Calu3 (cell line): ENCODE measurements at regions of chr4 and their contacts with region 1.

Region 1: DNA sequence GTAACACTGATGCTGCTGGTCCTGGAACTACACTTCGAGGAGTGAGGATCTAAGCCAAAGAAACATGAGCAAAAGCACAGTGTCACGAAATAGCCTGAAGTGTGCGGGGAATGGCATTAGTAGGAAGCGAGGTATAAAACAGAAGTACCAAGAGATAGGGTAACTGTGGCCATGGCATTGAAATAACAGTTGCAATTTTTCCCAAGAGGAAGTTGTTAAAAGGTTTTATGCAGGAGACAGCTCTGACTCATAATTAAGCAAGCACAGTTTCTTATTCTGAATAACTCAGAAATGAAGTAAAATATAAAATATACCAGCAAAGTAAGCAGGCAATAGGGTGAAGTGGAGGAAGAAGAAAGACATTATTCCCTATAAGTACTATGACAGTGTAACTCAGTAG is 90.3 kb upstream of the TMEM150C start:
- DNase-seq: no peak
- H3K4me3 Mint-ChIP-seq: no peak overlapping the region
- H3K27ac Mint-ChIP-seq: no peak overlapping the region
- H3K4me1 Mint-ChIP-seq: peaks cover 10% of the 10 kb centered on the region
- H3K27me3 Mint-ChIP-seq: no peaks in the 10 kb centered on the region
- CTCF ChIP-seq: no peak

Region 2: DNA sequence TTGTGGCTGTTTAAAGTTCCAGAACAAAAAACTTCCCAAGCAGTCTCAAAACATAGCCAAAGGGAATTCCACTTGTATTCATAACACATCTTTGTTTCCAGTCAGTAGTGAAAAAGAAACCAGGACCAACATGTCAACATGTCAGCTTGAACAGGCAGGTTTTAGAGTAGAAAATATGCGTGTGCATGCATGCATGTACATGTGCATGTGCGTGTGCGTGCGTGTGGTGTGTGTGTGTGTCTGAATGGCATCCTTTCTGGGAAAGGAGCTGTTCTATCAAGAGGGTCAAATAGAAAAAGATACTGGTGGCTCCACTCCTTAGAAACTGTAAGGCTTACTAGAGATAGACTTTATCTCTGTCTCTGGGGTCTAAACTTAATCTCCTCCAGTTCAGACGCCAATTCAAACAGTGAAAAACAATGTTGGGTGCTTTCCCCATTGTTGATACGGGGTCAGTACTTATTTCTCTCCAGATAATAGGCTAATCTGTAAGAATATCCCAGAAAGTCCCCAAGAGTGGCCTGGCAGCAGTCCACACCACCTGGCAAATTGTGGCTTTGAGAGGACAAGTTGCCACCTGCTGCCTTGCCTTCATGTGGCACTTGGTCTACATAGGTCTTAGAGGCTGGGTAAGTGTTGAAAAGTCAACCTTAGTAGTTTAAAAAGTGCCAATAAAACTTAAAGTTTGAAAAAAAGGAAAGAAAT is 36.2 kb after region 1 on chr4:
- CTCF ChIA-PET with region 1: no interaction called
- intact Hi-C with region 1: no loop called
- DNase-seq: no peak
- H3K4me3 Mint-ChIP-seq: no peak overlapping the region
- H3K27ac Mint-ChIP-seq: no peak overlapping the region
- H3K4me1 Mint-ChIP-seq: no peaks in the 10 kb centered on the region
- H3K27me3 Mint-ChIP-seq: no peaks in the 10 kb centered on the region
- CTCF ChIP-seq: no peak

Region 3: DNA sequence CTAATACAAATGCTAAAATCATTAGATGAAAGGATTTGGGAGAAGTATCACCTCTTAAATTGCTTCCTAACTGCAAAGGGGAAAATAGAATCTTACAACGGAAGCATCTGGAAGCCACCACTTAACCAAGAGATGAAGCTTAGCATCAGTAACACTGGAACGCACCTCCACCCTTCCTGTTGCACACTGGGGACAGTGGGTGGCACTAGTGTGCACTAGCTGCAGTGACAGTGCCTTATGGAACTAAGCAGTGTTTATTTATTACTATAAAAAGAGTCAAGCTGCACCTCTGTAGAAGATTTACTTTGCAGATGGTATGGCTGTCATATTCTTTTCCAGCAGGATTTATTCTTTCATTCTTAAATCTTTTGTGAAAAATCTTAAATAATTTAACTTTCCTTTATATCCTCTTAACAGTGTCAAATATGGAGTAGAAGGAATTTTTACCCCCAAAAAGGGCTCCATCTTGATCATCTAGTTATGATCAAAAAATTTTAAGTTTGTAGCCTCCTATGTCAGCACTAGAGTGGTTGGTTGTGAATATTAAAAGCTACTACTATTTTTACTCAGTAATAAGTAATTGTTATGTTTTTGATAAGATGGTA is 69.9 kb after region 1 on chr4:
- CTCF ChIA-PET with region 1: interaction called, 12 read pairs
- intact Hi-C with region 1: no loop called
- DNase-seq: peak; percentile 58
- H3K4me3 Mint-ChIP-seq: no peak overlapping the region
- H3K27ac Mint-ChIP-seq: no peak overlapping the region
- H3K4me1 Mint-ChIP-seq: no peaks in the 10 kb centered on the region
- H3K27me3 Mint-ChIP-seq: no peaks in the 10 kb centered on the region
- CTCF ChIP-seq: no peak